CD8-positive, alpha-beta memory T cell (primary cell): ENCODE measurements at regions of chr15 and their contacts with region 1.

Region 1: GRCh38 chr15:64095795-64096667 is at the start of gene SNX1:
- DNase-seq: peak; percentile 92 to 97 (median 95)
- H3K4me3 ChIP-seq: peak within 1 kb of the TSS; percentile 98
- H3K4me3 Mint-ChIP-seq: peak within 1 kb of the TSS; percentile 93 to 99 (median 97)
- H3K27ac ChIP-seq: peak within 1 kb of the TSS; percentile 88
- H3K27ac Mint-ChIP-seq: peak within 1 kb of the TSS; percentile 90 to 100 (median 97)
- H3K4me1 ChIP-seq: peaks cover 56% of the 10 kb centered on the region
- H3K4me1 Mint-ChIP-seq: peaks cover 71 to 88% (median 78%) of the 10 kb centered on the region in 3 donors
- H3K27me3 ChIP-seq: no peaks in the 10 kb centered on the region
- H3K27me3 Mint-ChIP-seq: no peaks in the 10 kb centered on the region
- total RNA-seq, gene SNX1: 90.1 to 93.6 TPM

Region 2: DNA sequence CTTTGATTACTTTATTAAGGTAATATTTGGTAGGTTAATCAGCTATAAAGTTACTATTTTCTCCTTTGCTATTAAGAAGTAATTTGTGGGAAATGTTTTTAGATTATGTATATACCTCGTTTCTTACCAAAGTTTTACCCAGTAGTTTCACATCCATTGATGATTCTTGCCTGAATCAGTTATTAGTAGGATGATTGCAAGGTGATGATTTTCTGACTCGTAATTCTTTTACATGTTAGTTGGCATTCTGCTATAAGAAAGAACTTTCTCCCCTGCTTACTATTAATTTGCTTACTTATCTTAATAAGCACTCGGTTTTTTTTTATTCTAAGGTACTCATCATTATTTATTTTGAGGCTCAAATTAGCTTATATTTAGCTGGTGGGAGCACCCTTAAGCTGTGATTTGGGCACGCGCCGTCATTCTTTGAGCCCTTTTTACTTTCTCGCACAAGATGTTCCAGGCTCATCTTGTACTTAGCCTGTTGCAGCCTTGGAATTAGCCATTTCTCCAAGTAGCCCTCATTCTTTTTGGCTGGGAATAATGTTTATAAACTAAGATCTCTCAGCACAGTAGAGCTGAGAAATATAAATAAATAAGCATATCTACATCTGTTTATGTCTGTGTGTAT is 576.4 kb before region 1 on chr15:
- CTCF ChIA-PET with region 1: no interaction called
- POLR2A ChIA-PET with region 1: interaction called, 12 read pairs
- DNase-seq: no peak
- H3K4me3 ChIP-seq: no peak overlapping the region
- H3K4me3 Mint-ChIP-seq: peak overlapping the region in 1 of 7 donors; percentile 3
- H3K27ac ChIP-seq: no peak overlapping the region
- H3K27ac Mint-ChIP-seq: peak overlapping the region in 3 of 8 donors; percentile 76 to 88 (median 77)
- H3K4me1 ChIP-seq: peaks cover 90% of the 10 kb centered on the region
- H3K4me1 Mint-ChIP-seq: peaks cover 91 to 99% (median 97%) of the 10 kb centered on the region in 3 donors
- H3K27me3 ChIP-seq: no peaks in the 10 kb centered on the region
- H3K27me3 Mint-ChIP-seq: no peaks in the 10 kb centered on the region